ENCODE measurements at regions of chr19 and their contacts with region 1.

Region 1: GRCh38 chr19:2997720-2998119 is 20.4 kb downstream of the TLE6 start:
- DNase-seq: no peak
- H3K4me3 ChIP-seq: no peak overlapping the region
- H3K27ac ChIP-seq: no peak overlapping the region
- H3K4me1 ChIP-seq: no peaks in the 10 kb centered on the region
- H3K27me3 ChIP-seq: no peaks in the 10 kb centered on the region
- CTCF ChIP-seq: no peak

Region 2: DNA sequence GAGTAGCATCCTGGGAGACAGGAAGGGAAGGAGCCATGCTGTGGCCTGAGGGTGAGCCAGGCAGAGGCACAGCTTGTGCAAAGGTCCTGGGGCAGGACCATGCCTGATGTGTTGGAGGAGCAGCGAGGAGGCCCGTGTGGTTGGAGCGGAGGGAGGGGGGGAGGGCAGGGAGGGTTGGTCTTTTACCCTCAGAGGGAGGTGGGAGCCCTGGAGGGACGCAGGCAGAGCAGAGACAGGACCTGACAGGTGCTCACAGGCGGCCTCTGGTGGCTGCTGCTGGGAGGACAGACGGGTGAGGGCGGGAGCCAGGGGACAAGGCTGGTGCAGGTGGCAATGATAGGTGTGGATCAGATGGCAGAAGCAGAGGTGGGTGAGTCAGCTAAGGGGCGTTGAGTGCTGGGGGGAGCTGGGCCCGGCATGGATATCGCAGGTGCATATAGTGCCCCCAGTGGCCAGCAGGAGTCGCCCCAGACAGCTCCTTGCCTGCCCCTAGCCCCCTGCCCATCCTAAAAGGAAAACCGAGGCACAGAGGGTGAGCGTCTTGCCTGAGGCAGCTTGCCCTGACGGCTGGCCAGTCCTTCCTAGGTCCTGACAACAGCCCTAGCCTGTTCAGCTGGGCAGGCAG is 128.3 kb after region 1 on chr19:
- intact Hi-C with region 1: no loop called
- DNase-seq: peak in 1 of 2 donors; percentile 74
- H3K4me3 ChIP-seq: no peak overlapping the region
- H3K27ac ChIP-seq: no peak overlapping the region
- H3K4me1 ChIP-seq: no peaks in the 10 kb centered on the region
- H3K27me3 ChIP-seq: no peaks in the 10 kb centered on the region
- CTCF ChIP-seq: peak; percentile 51 to 82 (median 80)

Region 3: GRCh38 chr19:3216874-3217273 is 219.2 kb after region 1 on chr19:
- intact Hi-C with region 1: loop called (anchors 5 kb)
- DNase-seq: no peak
- H3K4me3 ChIP-seq: no peak overlapping the region
- H3K27ac ChIP-seq: no peak overlapping the region
- H3K4me1 ChIP-seq: no peaks in the 10 kb centered on the region
- H3K27me3 ChIP-seq: no peaks in the 10 kb centered on the region
- CTCF ChIP-seq: no peak

Measured in ascending aorta (tissue), 2 donors.